ENCODE measurements at regions of chr18 and their contacts with region 1.

Region 1: DNA sequence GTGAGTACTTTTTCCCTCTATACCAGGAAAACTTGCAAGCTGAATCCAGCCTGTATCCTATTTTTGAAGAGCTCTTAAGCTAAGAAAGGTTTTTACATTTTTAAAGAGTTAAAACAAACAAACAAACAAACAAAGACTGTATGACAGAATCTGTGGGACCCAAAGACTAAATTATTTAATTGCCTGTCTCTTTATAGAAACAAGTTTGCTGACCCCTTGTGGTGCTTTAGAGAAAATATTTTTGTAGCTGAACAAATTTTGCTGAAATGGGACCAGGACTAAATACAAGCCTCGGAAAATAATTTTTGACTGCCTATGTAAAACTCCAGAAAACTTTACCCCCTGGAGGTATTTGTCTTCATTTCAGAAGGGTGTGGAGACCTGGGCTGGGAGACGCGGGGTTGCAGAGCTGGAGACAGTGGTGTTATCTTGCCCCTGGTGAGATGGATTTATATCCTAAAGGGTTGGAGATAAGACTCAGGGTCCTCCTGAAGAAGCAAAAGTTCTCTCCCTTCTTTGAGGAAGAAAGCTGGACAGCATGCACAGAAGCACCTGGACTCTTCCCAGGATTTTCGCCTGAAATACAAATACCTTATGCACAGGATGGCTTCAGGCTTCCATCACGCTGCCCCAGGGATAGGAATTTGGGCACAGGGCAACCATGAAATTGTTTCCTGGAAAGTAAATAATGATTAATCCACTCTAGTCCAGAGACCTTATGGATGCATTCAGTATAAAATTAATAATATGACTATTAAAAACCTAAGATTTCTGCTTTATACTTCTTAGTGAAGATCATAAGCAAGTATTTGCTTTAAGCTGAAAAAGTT is 54.3 kb downstream of the TMX3 start:
- DNase-seq: peak in 6 of 9 donors; percentile 2 to 34 (median 24)
- ATAC-seq: no peak
- H3K4me3 ChIP-seq: no peak overlapping the region
- H3K4me3 Mint-ChIP-seq: no peak overlapping the region
- H3K27ac ChIP-seq: no peak overlapping the region
- H3K27ac Mint-ChIP-seq: no peak overlapping the region
- H3K4me1 ChIP-seq: no peaks in the 10 kb centered on the region
- H3K4me1 Mint-ChIP-seq: no peaks in the 10 kb centered on the region
- H3K27me3 ChIP-seq: no peaks in the 10 kb centered on the region
- H3K27me3 Mint-ChIP-seq: peaks cover 0 to 8% (median 4%) of the 10 kb centered on the region in 5 donors

Region 2: DNA sequence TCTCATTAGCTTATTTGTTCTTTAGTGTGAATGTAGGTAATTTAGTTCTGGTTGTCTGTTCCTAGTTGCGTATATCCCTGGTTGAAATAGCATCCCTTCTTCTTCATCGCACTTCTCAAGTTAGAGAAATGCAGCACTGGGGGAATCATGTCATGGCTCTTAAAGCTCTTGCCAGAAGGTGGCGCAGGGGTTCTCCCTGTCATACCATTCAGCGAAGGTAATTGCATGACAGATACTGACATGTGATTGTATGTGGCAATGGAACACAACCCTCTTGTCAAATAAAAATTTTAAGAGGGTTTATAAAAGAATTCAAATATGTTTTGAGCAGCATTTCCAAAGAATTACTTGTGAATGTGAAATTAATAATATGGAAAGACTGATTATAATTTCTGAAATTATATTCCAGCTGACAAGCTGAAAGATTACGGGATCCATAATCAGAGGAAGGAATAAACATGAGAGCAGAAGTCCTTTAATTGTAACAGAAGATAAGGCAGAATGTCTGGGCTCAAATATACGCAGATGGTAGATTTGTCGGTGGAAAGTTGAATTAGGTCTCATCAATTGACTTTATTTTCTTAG is 1555.8 kb before region 1 on chr18:
- CTCF ChIA-PET with region 1: no interaction called
- POLR2A ChIA-PET with region 1: no interaction called
- intact Hi-C with region 1: loop called in 1 of 2 experiments (anchors 5 kb)
- DNase-seq: peak in 4 of 9 donors; percentile 2 to 24 (median 6)
- ATAC-seq: peak; percentile 42
- H3K4me3 ChIP-seq: no peak overlapping the region
- H3K4me3 Mint-ChIP-seq: no peak overlapping the region
- H3K27ac ChIP-seq: no peak overlapping the region
- H3K27ac Mint-ChIP-seq: no peak overlapping the region
- H3K4me1 ChIP-seq: no peaks in the 10 kb centered on the region
- H3K4me1 Mint-ChIP-seq: no peaks in the 10 kb centered on the region
- H3K27me3 ChIP-seq: no peaks in the 10 kb centered on the region
- H3K27me3 Mint-ChIP-seq: peaks cover 0 to 9% (median 0%) of the 10 kb centered on the region in 5 donors

Region 3: DNA sequence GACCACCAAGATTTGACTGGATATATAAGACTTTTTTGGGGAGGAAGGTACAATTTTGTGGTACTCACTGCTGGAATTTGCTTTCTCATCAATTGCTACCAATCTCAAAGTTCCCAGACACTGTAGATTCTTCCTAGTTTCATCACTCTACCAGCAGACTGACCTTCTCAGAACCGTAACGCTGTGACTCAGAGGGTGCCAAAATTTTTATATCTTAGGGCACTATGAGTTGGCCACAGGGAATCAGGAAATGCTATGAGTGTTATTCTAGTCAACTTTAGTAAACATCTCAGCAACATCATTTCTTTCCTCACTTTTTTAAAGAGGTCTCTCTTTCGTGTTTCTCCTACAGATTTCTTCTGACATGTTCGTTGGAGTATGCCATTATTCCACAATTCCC is 444.6 kb before region 1 on chr18:
- CTCF ChIA-PET with region 1: no interaction called
- POLR2A ChIA-PET with region 1: no interaction called
- intact Hi-C with region 1: loop called in 1 of 2 experiments (anchors 10 kb)
- DNase-seq: no peak
- ATAC-seq: no peak
- H3K4me3 ChIP-seq: no peak overlapping the region
- H3K4me3 Mint-ChIP-seq: no peak overlapping the region
- H3K27ac ChIP-seq: no peak overlapping the region
- H3K27ac Mint-ChIP-seq: no peak overlapping the region
- H3K4me1 ChIP-seq: no peaks in the 10 kb centered on the region
- H3K4me1 Mint-ChIP-seq: no peaks in the 10 kb centered on the region
- H3K27me3 ChIP-seq: no peaks in the 10 kb centered on the region
- H3K27me3 Mint-ChIP-seq: no peaks in the 10 kb centered on the region

Region 4: GRCh38 chr18:68735483-68736343 is 75.1 kb after region 1 on chr18:
- CTCF ChIA-PET with region 1: no interaction called
- POLR2A ChIA-PET with region 1: no interaction called
- intact Hi-C with region 1: loop called (anchors 1 kb)
- DNase-seq: peak in 5 of 9 donors; percentile 28 to 46 (median 36)
- ATAC-seq: peak; percentile 78
- H3K4me3 ChIP-seq: no peak overlapping the region
- H3K4me3 Mint-ChIP-seq: no peak overlapping the region
- H3K27ac ChIP-seq: no peak overlapping the region
- H3K27ac Mint-ChIP-seq: no peak overlapping the region
- H3K4me1 ChIP-seq: no peaks in the 10 kb centered on the region
- H3K4me1 Mint-ChIP-seq: peaks cover 0 to 5% (median 0%) of the 10 kb centered on the region in 7 donors
- H3K27me3 ChIP-seq: no peaks in the 10 kb centered on the region
- H3K27me3 Mint-ChIP-seq: no peaks in the 10 kb centered on the region